ENCODE measurements at regions of chrX and their contacts with region 1.

Region 1: DNA sequence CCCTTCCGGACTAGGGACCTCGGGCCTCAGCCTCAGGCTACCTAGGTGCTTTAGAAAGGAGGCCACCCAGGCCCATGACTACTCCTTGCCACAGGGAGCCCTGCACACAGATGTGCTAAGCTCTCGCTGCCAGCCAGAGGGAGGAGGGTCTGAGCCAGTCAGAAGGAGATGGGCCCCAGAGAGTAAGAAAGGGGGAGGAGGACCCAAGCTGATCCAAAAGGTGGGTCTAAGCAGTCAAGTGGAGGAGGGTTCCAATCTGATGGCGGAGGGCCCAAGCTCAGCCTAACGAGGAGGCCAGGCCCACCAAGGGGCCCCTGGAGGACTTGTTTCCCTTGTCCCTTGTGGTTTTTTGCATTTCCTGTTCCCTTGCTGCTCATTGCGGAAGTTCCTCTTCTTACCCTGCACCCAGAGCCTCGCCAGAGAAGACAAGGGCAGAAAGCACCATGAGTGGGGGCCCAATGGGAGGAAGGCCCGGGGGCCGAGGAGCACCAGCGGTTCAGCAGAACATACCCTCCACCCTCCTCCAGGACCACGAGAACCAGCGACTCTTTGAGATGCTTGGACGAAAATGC is at the start of gene WAS:
- DNase-seq: peak in 4 of 5 donors; percentile 19 to 68 (median 56)
- H3K4me3 ChIP-seq: peak within 1 kb of the TSS; percentile 81
- H3K4me3 Mint-ChIP-seq: peak within 1 kb of the TSS; percentile 87 to 99 (median 94)
- H3K27ac ChIP-seq: peak within 1 kb of the TSS; percentile 70
- H3K27ac Mint-ChIP-seq: peak within 1 kb of the TSS; percentile 87 to 98 (median 92)
- H3K4me1 ChIP-seq: peaks cover 36% of the 10 kb centered on the region
- H3K4me1 Mint-ChIP-seq: peaks cover 41 to 59% (median 50%) of the 10 kb centered on the region in 3 donors
- H3K27me3 ChIP-seq: no peaks in the 10 kb centered on the region
- H3K27me3 Mint-ChIP-seq: peaks cover 0 to 5% of the 10 kb centered on the region in 2 donors
- total RNA-seq, gene WAS: 81.9 to 84.0 TPM

Region 2: DNA sequence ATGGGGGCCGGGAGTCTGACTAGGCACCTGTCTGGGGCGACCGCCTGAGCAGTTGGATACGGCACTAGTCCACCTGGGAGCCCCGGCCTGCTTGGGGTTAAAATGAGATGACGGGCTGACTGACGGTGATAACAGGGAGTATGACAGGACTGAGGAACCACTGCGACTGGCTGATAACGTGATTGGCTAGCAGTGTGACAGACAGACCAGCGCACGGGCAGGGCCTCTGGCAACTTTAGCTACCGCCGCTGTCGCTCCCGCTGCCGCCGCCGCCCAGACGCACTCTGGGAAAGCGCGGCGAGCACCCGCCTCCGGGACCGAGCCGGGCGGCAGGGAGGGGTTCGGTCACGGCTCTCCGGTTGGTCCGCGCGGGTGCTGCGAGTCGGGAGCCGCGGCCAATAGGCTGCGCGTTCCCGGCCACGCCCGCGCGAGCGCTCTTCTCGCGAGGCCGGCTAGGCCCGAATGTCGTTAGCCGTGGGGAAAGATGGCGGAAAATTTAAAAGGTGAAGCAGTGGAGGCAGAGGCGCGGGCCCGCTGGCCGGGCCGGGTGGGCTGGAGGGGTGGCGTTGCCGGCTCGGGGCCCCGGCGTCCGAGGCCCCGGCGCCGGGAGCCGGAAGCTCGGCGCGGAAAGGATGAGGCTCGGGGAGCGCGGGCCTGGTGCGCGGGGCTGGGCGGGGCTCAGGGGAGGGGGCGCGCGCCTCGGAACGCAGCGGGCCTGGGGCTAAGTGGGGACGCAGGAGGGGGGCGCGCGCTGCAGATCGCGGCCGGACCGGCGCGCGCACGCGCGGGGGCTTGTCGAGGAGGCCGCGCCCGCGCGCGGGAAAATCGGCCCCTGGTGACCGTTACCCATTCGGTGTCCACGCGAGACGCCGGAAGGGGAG is 13.0 kb after region 1 on chrX and contains the start of gene SUV39H1:
- CTCF ChIA-PET with region 1: interaction called, 4 read pairs
- POLR2A ChIA-PET with region 1: interaction called, 16 read pairs
- DNase-seq: peak; percentile 77 to 90 (median 86)
- H3K4me3 ChIP-seq: peak within 1 kb of the TSS; percentile 80
- H3K4me3 Mint-ChIP-seq: peak within 1 kb of the TSS; percentile 83 to 93 (median 88)
- H3K27ac ChIP-seq: peak within 1 kb of the TSS; percentile 87
- H3K27ac Mint-ChIP-seq: peak within 1 kb of the TSS; percentile 86 to 98 (median 96)
- H3K4me1 ChIP-seq: peaks cover 17% of the 10 kb centered on the region
- H3K4me1 Mint-ChIP-seq: peaks cover 24 to 44% (median 31%) of the 10 kb centered on the region in 3 donors
- H3K27me3 ChIP-seq: no peaks in the 10 kb centered on the region
- H3K27me3 Mint-ChIP-seq: peaks cover 0 to 4% of the 10 kb centered on the region in 2 donors
- total RNA-seq, gene SUV39H1: 32.1 to 33.2 TPM

Measured in CD8-positive, alpha-beta memory T cell (primary cell).